HCT116 (cell line): ENCODE measurements at regions of chr9 and their contacts with region 1.

Region 1: DNA sequence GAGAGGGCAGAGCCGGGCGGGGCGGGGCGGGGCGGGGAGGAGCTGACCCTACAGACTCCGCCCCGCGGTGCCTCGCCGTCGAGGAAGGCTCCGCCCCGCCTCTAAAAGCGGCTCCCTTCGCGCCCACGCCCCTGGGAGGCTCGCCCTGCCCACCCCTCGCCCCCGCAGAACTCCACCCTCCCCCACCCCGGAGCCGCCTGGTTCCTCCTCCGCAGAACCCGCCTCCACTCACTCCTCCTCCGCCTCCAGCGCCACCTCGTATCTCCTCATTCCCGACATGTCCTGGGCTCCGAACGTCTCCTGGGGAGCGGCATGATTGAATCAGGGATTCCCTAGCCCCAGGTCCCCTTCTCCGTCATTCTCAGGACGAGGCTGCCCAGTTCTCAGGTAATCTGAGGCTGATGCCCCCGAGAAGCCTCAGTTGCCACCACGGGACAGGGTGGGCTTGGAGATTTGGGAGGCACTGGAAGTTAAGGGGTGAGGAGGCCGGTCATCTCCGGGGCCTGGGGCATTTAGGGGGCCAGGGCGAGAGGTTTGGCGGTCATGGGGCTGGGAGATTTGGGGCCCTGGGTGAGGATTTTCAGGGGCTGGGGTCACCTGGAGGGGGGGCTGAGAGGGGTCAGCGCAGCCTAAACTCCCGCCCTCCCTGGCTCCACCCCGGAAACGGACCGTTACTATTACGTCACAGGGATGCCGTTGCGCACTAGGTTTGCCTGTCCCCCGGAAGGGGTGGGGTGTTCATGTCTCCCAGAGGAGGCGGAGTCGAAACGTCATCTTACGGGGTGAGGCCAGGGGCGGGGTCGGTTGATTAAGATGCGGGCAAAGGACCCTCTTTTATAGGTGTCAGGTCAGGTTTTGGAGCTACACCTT is 3.2 kb upstream of the CCL27 start:
- DNase-seq: peak; percentile 92
- ATAC-seq: peak; percentile 83
- H3K4me3 ChIP-seq: peak overlapping the region; percentile 91
- H3K27ac ChIP-seq: peak overlapping the region; percentile 88
- H3K4me1 ChIP-seq: peaks cover 10 to 27% of the 10 kb centered on the region in 2 experiments
- H3K27me3 ChIP-seq: no peaks in the 10 kb centered on the region
- CTCF ChIP-seq: no peak
- POLR2A ChIP-seq: peak; percentile 69
- RAD21 ChIP-seq: no peak

Region 2: DNA sequence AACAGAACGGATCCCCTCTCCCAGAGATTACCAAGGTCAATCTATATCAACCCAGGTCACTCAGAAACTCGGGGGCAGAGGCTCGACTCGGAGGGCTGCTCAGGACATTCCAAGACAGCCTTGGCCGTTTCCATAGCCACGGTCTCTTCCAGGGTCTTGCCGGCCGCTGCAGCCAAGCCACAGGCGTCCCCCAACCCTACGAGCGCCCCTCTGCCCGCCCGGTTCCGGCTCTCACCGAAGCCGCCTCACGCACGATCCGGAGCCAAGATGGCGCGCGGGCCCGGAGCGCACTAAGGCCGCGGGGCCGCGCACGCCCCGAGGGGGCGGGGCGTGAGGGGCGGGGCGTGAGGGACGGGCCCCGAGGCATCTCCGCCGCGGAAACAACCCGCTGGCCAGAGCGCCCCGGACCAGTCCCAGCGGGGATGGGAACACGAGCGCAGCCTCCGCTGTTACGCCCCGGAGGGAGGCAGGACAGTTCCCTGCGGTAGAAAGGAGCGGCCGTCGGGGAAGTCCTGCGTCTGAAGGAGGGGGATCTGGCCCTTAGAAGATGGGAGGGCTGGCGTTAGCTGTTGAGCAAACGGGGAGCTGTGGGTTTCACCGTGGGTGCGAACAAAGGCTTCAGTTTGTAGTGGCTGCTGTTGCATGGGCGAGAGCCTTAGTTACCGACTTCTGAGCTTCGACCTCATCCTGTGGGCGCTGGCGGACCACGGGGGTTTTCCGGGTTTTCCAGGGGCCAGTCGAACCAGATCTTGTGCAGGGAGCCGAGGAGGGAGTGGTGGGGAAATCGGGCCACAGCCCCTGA is 53.6 kb before region 1 on chr9 and contains the start of gene RPP25L:
- CTCF ChIA-PET with region 1: no interaction called
- POLR2A ChIA-PET with region 1: no interaction called
- RAD21 ChIA-PET with region 1: no interaction called
- intact Hi-C with region 1: loop called (anchors 2 kb)
- DNase-seq: peak; percentile 49
- ATAC-seq: peak; percentile 89
- H3K4me3 ChIP-seq: peak within 1 kb of the TSS; percentile 87 to 95
- H3K27ac ChIP-seq: peak within 1 kb of the TSS; percentile 82
- H3K4me1 ChIP-seq: peaks cover 5 to 28% of the 10 kb centered on the region in 2 experiments
- H3K27me3 ChIP-seq: no peaks in the 10 kb centered on the region
- CTCF ChIP-seq: no peak
- POLR2A ChIP-seq: peak; percentile 87
- RAD21 ChIP-seq: no peak
- total RNA-seq, gene RPP25L: 51.1 TPM

Region 3: GRCh38 chr9:34637356-34638137 is 28.1 kb before region 1 on chr9 and contains the start of gene SIGMAR1:
- CTCF ChIA-PET with region 1: interaction called, 7 read pairs
- POLR2A ChIA-PET with region 1: interaction called, 14 read pairs
- RAD21 ChIA-PET with region 1: no interaction called
- intact Hi-C with region 1: no loop called
- DNase-seq: peak; percentile 84
- ATAC-seq: peak; percentile 86
- H3K4me3 ChIP-seq: peak within 1 kb of the TSS; percentile 94
- H3K27ac ChIP-seq: peak within 1 kb of the TSS; percentile 85
- H3K4me1 ChIP-seq: peaks cover 15 to 38% of the 10 kb centered on the region in 2 experiments; a peak in 3 of 4 replicates
- H3K27me3 ChIP-seq: no peaks in the 10 kb centered on the region
- CTCF ChIP-seq: no peak
- POLR2A ChIP-seq: peak; percentile 92
- RAD21 ChIP-seq: no peak
- total RNA-seq, gene SIGMAR1: 109 TPM

Region 4: GRCh38 chr9:34646211-34647083 is 19.2 kb before region 1 on chr9 and contains the start of gene GALT:
- CTCF ChIA-PET with region 1: interaction called, 12 read pairs
- POLR2A ChIA-PET with region 1: interaction called, 9 read pairs
- RAD21 ChIA-PET with region 1: no interaction called
- intact Hi-C with region 1: no loop called
- DNase-seq: peak; percentile 65
- ATAC-seq: peak; percentile 88
- H3K4me3 ChIP-seq: peak within 1 kb of the TSS; percentile 80 to 85
- H3K27ac ChIP-seq: peak within 1 kb of the TSS; percentile 92
- H3K4me1 ChIP-seq: peaks cover 20 to 37% of the 10 kb centered on the region in 2 experiments; a peak in 3 of 4 replicates
- H3K27me3 ChIP-seq: no peaks in the 10 kb centered on the region
- CTCF ChIP-seq: peak in 2 of 3 experiments; percentile 43 to 45; a peak in 4 of 6 replicates
- POLR2A ChIP-seq: peak; percentile 85
- RAD21 ChIP-seq: no peak
- total RNA-seq, gene GALT: 28.2 TPM

Region 5: GRCh38 chr9:34732893-34733292 is 67.3 kb after region 1 on chr9:
- CTCF ChIA-PET with region 1: no interaction called
- POLR2A ChIA-PET with region 1: no interaction called
- RAD21 ChIA-PET with region 1: no interaction called
- intact Hi-C with region 1: no loop called
- DNase-seq: no peak
- ATAC-seq: no peak
- H3K4me3 ChIP-seq: no peak overlapping the region
- H3K27ac ChIP-seq: no peak overlapping the region
- H3K4me1 ChIP-seq: no peaks in the 10 kb centered on the region
- H3K27me3 ChIP-seq: no peaks in the 10 kb centered on the region
- CTCF ChIP-seq: no peak
- POLR2A ChIP-seq: no peak
- RAD21 ChIP-seq: no peak

Region 6: GRCh38 chr9:34884732-34885131 is 219.1 kb after region 1 on chr9:
- CTCF ChIA-PET with region 1: no interaction called
- POLR2A ChIA-PET with region 1: no interaction called
- RAD21 ChIA-PET with region 1: no interaction called
- intact Hi-C with region 1: no loop called
- DNase-seq: no peak
- ATAC-seq: no peak
- H3K4me3 ChIP-seq: no peak overlapping the region
- H3K27ac ChIP-seq: no peak overlapping the region
- H3K4me1 ChIP-seq: no peaks in the 10 kb centered on the region
- H3K27me3 ChIP-seq: peaks cover 18% of the 10 kb centered on the region; the same call in 1 of the 2 replicates
- CTCF ChIP-seq: no peak
- POLR2A ChIP-seq: no peak
- RAD21 ChIP-seq: no peak

Region 7: GRCh38 chr9:36102742-36103495 is 1437.3 kb after region 1 on chr9:
- CTCF ChIA-PET with region 1: no interaction called
- POLR2A ChIA-PET with region 1: no interaction called
- RAD21 ChIA-PET with region 1: no interaction called
- intact Hi-C with region 1: no loop called
- DNase-seq: peak; percentile 57
- ATAC-seq: peak; percentile 97
- H3K4me3 ChIP-seq: no peak overlapping the region
- H3K27ac ChIP-seq: no peak overlapping the region
- H3K4me1 ChIP-seq: peaks cover 0 to 24% of the 10 kb centered on the region in 2 experiments; a peak in 2 of 4 replicates
- H3K27me3 ChIP-seq: no peaks in the 10 kb centered on the region
- CTCF ChIP-seq: peak; percentile 76 to 93 (median 90)
- POLR2A ChIP-seq: no peak
- RAD21 ChIP-seq: peak; percentile 71